Activated CD4-positive, alpha-beta T cell treated with anti-CD3 and anti-CD28 coated beads, Interleukin-2, amount 10 ng/mL, durations not matched to agents 24 days and 14 days (primary cell): ENCODE measurements at regions of chr12 and their contacts with region 1.

Region 1: GRCh38 chr12:89756585-89757321 is 48.1 kb upstream of the ATP2B1 start:
- DNase-seq: peak; percentile 78
- H3K4me3 Mint-ChIP-seq: peak overlapping the region; percentile 10
- H3K27ac Mint-ChIP-seq: peak overlapping the region; percentile 77
- H3K4me1 Mint-ChIP-seq: peaks cover 22% of the 10 kb centered on the region
- H3K27me3 Mint-ChIP-seq: peaks cover 2% of the 10 kb centered on the region

Region 2: DNA sequence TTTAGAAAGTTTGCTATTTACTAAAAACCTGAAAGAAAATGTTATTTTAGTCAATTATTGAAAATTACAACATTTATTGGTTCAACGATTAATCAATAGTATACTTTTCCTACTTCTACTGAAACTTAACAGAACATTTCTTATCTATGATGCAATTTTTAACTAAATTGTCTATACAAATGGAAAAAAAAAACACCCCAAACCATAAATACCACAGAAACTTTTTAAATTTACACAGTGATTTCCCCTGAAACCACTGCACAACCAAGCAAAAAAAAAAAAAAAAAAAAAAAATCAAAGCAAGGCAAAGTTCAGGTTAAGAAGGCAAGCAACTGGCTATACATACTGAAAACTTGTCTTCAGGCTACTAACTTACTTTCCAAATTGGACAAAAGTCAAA is 159.0 kb before region 1 on chr12:
- intact Hi-C with region 1: loop called (anchors 5 kb)
- DNase-seq: no peak
- H3K4me3 Mint-ChIP-seq: no peak overlapping the region
- H3K27ac Mint-ChIP-seq: peak overlapping the region; percentile 76
- H3K4me1 Mint-ChIP-seq: peaks cover 13% of the 10 kb centered on the region
- H3K27me3 Mint-ChIP-seq: peaks cover 10% of the 10 kb centered on the region

Region 3: GRCh38 chr12:89721291-89721987 is 35.3 kb before region 1 on chr12:
- intact Hi-C with region 1: no loop called
- DNase-seq: no peak
- H3K4me3 Mint-ChIP-seq: no peak overlapping the region
- H3K27ac Mint-ChIP-seq: no peak overlapping the region
- H3K4me1 Mint-ChIP-seq: no peaks in the 10 kb centered on the region
- H3K27me3 Mint-ChIP-seq: no peaks in the 10 kb centered on the region

Region 4: GRCh38 chr12:89856431-89856830 is 99.7 kb after region 1 on chr12:
- intact Hi-C with region 1: loop called (anchors 1 kb)
- DNase-seq: peak; percentile 62
- H3K4me3 Mint-ChIP-seq: peak overlapping the region; percentile 3
- H3K27ac Mint-ChIP-seq: peak overlapping the region; percentile 56
- H3K4me1 Mint-ChIP-seq: peaks cover 42% of the 10 kb centered on the region
- H3K27me3 Mint-ChIP-seq: peaks cover 2% of the 10 kb centered on the region

Region 5: DNA sequence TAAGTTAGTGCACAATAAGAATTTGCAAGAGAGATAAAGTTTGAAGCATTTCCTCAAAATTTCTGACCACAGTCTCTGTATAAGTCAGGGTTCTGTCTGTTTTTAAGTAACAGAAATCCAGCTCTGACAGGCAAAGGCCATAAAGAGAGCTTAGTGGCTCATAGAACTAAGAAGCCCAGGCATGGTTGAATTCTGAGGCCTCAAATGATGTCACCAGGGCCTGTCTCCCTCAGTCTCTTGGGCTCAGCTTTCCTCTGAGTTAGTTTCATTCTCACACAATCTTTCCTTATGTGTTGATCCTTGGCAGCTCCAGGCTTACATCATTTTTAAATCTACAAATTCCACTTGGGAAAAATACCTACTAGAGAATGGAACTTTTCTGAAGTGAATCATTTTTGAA is 125.3 kb after region 1 on chr12:
- intact Hi-C with region 1: loop called (anchors 2 kb)
- DNase-seq: peak; percentile 71
- H3K4me3 Mint-ChIP-seq: peak overlapping the region; percentile 20
- H3K27ac Mint-ChIP-seq: peak overlapping the region; percentile 78
- H3K4me1 Mint-ChIP-seq: peaks cover 29% of the 10 kb centered on the region
- H3K27me3 Mint-ChIP-seq: no peaks in the 10 kb centered on the region

Region 6: DNA sequence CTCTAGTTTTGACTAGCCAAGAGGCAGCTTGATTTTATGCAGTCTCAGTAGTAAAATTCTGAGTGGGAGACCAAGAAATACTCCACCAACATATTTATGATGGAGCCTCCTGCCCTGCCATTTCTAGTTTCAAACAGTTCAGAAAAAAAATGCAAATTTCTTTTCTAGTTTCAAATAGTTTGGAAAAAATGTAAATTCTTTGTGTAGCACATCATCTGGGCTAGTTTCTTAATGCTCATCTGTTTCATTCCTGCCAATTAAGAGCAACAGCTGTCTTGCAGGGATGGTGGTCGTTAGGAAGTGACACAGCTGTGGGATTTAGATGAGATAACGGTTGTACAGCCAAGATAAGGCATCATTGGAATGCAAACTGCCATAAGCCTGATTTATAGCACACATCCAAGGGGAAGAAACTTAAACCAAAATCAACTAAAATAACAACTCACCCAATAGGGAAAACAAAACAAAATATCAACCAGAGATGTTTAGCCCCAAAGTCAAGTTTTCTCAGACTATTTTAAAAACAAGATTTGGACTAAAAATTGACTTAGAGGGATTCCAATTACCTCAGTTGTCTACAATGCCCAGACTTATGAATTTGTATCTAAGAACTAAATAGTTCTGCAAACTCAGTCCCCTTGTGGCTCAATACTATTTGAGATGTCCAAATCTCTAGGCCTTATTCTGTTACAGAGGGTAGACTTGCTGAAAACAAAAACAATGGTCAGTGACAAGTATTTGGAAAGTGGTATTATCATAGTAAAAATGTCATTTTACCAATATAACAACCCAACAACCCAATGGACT is 243.1 kb after region 1 on chr12:
- intact Hi-C with region 1: no loop called
- DNase-seq: no peak
- H3K4me3 Mint-ChIP-seq: no peak overlapping the region
- H3K27ac Mint-ChIP-seq: no peak overlapping the region
- H3K4me1 Mint-ChIP-seq: peaks cover 2% of the 10 kb centered on the region
- H3K27me3 Mint-ChIP-seq: peaks cover 6% of the 10 kb centered on the region

Region 7: DNA sequence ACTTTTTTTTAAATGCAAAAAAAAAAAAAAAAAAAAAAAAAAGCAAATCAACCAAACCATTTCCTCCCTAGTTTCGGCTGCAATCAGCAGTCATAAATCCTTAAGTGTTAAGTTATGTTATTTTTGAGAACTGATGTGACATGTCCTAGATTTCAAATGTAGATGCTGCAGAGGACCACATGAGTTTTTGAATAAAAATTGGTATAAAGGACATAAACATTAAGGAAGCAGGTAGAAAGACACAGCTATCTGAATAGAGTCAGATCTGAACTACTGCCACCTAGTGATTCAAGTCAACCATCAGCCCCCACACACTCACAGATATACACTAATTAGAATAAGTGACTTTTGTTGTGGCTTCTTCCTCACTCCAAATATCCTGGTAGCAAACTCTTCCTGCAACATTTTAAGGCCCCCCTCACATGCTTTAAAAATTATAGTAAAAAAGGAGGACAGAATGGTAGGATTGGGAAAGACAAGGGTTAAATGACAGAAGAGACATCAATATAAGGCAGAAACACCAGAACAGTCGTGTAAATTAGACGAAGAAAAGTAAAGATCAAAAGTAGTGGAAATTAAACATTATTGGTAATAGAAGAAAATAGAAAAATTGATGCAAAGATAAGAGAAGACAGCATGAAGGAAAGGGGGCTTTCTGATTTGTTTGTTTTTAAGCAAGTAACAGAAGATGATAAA is 346.4 kb after region 1 on chr12:
- intact Hi-C with region 1: loop called (anchors 5 kb)
- DNase-seq: peak; percentile 64
- H3K4me3 Mint-ChIP-seq: no peak overlapping the region
- H3K27ac Mint-ChIP-seq: no peak overlapping the region
- H3K4me1 Mint-ChIP-seq: peaks cover 5% of the 10 kb centered on the region
- H3K27me3 Mint-ChIP-seq: peaks cover 14% of the 10 kb centered on the region